ENCODE measurements at regions of chr20 and their contacts with region 1.

Region 1: GRCh38 chr20:21505161-21505809 is 8.6 kb downstream of the NKX2-2 start:
- DNase-seq: peak; percentile 46 to 78 (median 73)
- H3K4me3 ChIP-seq: peak overlapping the region in 1 of 4 donors; percentile 41
- H3K27ac ChIP-seq: no peak overlapping the region
- H3K4me1 ChIP-seq: peaks cover 6 to 13% of the 10 kb centered on the region in 2 donors
- H3K27me3 ChIP-seq: peaks cover 62% of the 10 kb centered on the region
- CTCF ChIP-seq: peak; percentile 92 to 98 (median 96)
- POLR2A ChIP-seq: no peak

Region 2: GRCh38 chr20:20856306-20856705 is 649.0 kb before region 1 on chr20:
- intact Hi-C with region 1: loop called in 1 of 2 experiments (anchors 5 kb)
- DNase-seq: no peak
- H3K4me3 ChIP-seq: no peak overlapping the region
- H3K27ac ChIP-seq: no peak overlapping the region
- H3K4me1 ChIP-seq: no peaks in the 10 kb centered on the region
- H3K27me3 ChIP-seq: peaks cover 6% of the 10 kb centered on the region
- CTCF ChIP-seq: no peak
- POLR2A ChIP-seq: no peak

Region 3: GRCh38 chr20:21234806-21235483 is 270.3 kb before region 1 on chr20:
- intact Hi-C with region 1: loop called (anchors 2 to 5 kb)
- DNase-seq: no peak
- H3K4me3 ChIP-seq: no peak overlapping the region
- H3K27ac ChIP-seq: no peak overlapping the region
- H3K4me1 ChIP-seq: peaks cover 5 to 7% of the 10 kb centered on the region in 2 donors
- H3K27me3 ChIP-seq: no peaks in the 10 kb centered on the region
- CTCF ChIP-seq: no peak
- POLR2A ChIP-seq: no peak

Region 4: DNA sequence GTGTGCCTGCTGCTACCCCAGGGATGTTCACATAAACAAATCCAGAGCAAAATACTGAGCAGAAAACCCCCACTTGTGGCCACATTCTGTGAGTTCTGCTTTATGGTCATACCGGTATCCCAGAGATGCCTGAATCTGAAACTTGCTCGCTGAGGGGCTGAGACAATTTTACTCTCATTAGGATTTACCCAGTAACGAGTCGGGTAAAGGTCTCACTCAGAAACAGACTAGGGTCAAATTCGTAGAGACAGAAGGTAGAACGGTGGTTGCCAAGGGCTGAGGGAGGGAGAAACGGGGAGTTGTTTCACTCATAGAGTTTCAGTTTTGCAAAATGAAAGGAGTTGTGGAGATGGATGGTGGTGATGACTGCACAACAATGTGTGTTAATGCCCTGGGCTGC is 54.0 kb after region 1 on chr20:
- intact Hi-C with region 1: no loop called
- DNase-seq: no peak
- H3K4me3 ChIP-seq: no peak overlapping the region
- H3K27ac ChIP-seq: no peak overlapping the region
- H3K4me1 ChIP-seq: no peaks in the 10 kb centered on the region
- H3K27me3 ChIP-seq: no peaks in the 10 kb centered on the region
- CTCF ChIP-seq: no peak
- POLR2A ChIP-seq: no peak

Measured in adrenal gland (tissue), 19 donors.